Naive thymus-derived CD4-positive, alpha-beta T cell (primary cell): ENCODE measurements at regions of chr5 and their contacts with region 1.

Region 1: DNA sequence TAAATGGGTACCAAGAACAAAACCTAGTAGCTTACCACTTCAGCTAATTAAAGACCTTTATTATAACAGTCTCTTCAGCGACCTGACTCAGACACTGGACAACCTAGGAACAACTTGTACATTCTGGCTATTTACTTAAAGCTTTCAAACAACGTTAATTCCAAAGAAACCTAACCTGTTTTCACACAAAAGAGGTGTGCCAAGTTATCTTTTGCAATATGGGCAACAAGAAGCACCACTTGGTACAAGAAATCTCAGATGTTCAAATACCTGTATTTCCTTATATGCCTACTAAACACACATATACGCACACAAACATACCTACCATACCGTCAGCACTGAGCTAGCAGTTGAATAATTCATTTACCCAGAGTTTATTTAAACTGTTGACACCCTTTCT is 23.0 kb downstream of the RNF145 start:
- DNase-seq: no peak
- ATAC-seq: no peak
- H3K4me3 ChIP-seq: no peak overlapping the region
- H3K4me3 Mint-ChIP-seq: no peak overlapping the region
- H3K27ac ChIP-seq: no peak overlapping the region
- H3K27ac Mint-ChIP-seq: peak overlapping the region in 7 of 9 donors; percentile 25 to 86 (median 60)
- H3K4me1 ChIP-seq: peaks cover 0 to 1% of the 10 kb centered on the region in 2 donors
- H3K4me1 Mint-ChIP-seq: peaks cover 19 to 81% (median 72%) of the 10 kb centered on the region in 7 donors
- H3K27me3 ChIP-seq: no peaks in the 10 kb centered on the region
- H3K27me3 Mint-ChIP-seq: no peaks in the 10 kb centered on the region

Region 2: GRCh38 chr5:159198063-159199036 is 12.0 kb after region 1 on chr5:
- CTCF ChIA-PET with region 1: interaction called, 3 read pairs
- POLR2A ChIA-PET with region 1: interaction called, 3 read pairs
- intact Hi-C with region 1: loop called in 1 of 2 experiments (anchors 1 kb)
- DNase-seq: peak in 3 of 9 donors; percentile 29 to 36 (median 31)
- ATAC-seq: peak; percentile 87
- H3K4me3 ChIP-seq: no peak overlapping the region
- H3K4me3 Mint-ChIP-seq: peak overlapping the region in 9 of 10 donors; percentile 3 to 63 (median 48)
- H3K27ac ChIP-seq: peak overlapping the region; percentile 9
- H3K27ac Mint-ChIP-seq: peak overlapping the region; percentile 0 to 83 (median 51)
- H3K4me1 ChIP-seq: peaks cover 23 to 37% of the 10 kb centered on the region in 2 donors
- H3K4me1 Mint-ChIP-seq: peaks cover 43 to 92% (median 86%) of the 10 kb centered on the region in 7 donors
- H3K27me3 ChIP-seq: no peaks in the 10 kb centered on the region
- H3K27me3 Mint-ChIP-seq: no peaks in the 10 kb centered on the region